Testis (tissue), 5 donors: ENCODE measurements at regions of chr11 and their contacts with region 1.

Region 1: DNA sequence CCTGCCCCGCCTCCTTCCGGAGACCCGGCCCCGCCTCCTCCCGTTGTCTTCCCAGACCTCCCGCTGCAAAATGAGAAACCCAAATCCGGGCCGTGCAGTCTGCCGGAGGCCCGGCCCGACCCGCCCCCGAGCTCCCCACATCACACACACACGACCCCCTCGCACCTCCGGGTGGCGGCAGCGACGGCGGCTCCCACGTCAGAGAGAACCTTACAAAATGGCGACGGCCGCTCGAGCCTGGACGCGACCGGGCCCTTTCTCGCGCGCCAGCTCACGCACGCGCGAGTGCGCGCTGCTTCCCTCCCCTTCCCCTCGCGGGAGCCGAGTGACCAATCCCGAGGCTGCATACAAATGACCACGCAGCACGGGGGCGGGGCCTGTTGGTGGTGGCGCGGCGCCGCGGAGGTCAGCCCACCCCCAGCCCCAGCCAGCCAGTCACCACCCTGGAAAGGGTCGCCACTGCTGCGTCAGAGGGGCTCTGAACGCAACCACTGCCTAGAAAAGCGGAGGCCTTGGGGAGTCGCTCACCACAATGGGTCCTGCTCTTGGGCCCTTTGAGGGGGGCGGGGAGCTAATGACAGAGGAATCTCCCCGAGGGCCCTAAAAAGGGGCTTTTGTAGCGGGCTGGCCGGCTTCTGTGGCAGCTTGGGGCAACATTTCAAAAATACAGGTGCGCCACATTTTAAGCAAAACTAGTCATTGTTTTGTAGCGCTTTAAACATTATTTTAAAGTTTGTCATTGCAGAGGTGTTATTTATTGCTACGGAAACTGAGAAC is at the start of gene RBM4B:
- DNase-seq: peak; percentile 98
- H3K4me3 ChIP-seq: peak within 1 kb of the TSS; percentile 63 to 84
- H3K27ac ChIP-seq: peak within 1 kb of the TSS; percentile 89
- H3K4me1 ChIP-seq: peaks cover 14% of the 10 kb centered on the region
- H3K27me3 ChIP-seq: no peaks in the 10 kb centered on the region
- CTCF ChIP-seq: no peak
- POLR2A ChIP-seq: peak; percentile 10
- total RNA-seq, gene RBM4B: 35.0 to 35.7 TPM

Region 2: DNA sequence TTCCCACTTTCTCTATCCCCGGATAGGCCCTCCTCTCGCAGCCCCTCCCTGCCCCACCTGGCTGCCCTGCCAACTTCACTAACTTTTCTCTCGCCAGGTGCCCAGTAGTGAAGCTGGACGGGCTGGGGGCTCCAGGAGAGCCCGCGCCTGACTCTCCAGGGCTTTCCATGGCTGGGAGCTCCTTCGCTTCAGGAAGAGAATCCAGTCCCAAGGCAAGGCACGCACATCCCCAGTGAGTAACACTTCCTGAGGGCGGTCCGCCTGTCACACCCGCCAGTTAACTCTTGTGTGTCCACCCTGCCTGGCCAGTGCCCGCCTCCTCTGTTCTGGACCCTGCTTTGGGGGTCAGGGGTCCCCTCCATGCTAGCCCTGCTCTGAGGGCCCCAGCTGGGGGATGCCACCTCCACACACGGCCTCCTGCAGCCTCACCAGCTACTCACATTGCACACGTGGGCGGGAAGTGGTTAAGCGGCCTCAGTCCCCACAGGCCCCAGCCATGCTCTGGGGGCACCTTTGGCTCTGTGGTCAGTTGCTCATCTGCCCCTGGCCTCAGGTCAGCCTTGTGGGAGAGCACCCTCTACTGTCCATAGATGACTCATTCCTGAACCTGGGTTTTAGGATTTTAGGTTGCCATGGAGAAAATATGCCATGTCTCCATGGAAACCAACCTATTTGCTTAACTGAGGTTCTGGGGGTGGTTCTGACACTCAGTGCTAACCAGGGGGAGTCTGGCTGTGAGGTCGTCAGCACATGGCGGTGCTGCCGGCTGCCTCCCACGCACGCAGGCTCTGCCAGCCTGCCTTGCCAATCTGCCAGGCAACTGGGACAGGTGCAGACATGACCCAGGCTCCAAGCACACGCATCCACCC is 341.3 kb before region 1 on chr11 and contains the start of gene RIN1:
- intact Hi-C with region 1: no loop called
- DNase-seq: no peak
- H3K4me3 ChIP-seq: peak within 1 kb of the TSS; percentile 21 to 39
- H3K27ac ChIP-seq: no peak within 1 kb of the TSS
- H3K4me1 ChIP-seq: peaks cover 14% of the 10 kb centered on the region
- H3K27me3 ChIP-seq: no peaks in the 10 kb centered on the region
- CTCF ChIP-seq: peak; percentile 26 to 37 (median 28)
- POLR2A ChIP-seq: no peak
- total RNA-seq, gene RIN1: 8.2 to 8.5 TPM

Region 3: DNA sequence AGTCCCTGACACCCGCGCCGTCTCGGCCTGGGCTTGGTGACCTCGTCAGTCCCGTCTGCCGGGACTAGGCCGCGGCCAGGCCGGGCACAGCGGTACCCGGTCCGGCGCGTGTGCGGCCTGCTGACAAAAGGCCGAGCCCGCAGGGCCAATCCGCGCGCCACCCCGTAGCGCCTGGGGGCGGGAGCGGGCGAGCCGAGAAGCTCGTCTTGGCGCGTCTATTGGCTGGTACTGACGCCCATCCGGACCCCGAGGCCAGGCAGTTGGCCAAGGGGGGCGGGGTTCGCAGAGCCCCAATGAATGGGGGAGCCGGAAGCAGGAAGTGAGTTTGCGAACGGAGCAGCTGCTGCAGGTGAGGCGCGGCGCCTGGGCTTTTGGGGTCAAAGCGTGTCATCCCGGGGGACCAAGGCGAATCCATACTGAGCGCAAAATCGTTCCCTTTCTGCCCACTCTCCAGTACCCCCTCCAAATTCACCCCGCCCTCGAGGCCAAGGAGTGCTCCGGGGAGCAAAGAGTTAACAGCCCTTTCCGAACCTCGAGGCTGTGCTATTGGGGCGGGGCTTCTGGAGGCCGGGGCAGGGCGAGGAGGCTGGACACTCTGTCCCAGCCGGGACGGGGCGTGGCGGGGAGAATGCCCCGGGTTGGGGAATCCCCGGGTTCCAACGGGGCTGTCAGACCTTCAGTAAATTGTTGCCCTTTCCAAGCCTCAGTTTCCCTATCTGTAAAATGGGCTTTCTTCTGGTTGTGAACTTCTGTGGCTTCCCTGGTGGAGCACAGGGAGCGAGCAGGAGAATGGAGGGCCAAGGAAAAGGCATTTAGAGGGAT is 197.5 kb before region 1 on chr11 and contains the start of gene DPP3:
- intact Hi-C with region 1: loop called (anchors 10 kb)
- DNase-seq: peak; percentile 98
- H3K4me3 ChIP-seq: peak within 1 kb of the TSS; percentile 66 to 75
- H3K27ac ChIP-seq: peak within 1 kb of the TSS; percentile 74 to 75
- H3K4me1 ChIP-seq: peaks cover 5% of the 10 kb centered on the region
- H3K27me3 ChIP-seq: no peaks in the 10 kb centered on the region
- CTCF ChIP-seq: peak in 2 of 3 experiments; percentile 4 to 24
- POLR2A ChIP-seq: peak; percentile 53
- total RNA-seq, gene DPP3: 29.3 to 31.0 TPM

Region 4: DNA sequence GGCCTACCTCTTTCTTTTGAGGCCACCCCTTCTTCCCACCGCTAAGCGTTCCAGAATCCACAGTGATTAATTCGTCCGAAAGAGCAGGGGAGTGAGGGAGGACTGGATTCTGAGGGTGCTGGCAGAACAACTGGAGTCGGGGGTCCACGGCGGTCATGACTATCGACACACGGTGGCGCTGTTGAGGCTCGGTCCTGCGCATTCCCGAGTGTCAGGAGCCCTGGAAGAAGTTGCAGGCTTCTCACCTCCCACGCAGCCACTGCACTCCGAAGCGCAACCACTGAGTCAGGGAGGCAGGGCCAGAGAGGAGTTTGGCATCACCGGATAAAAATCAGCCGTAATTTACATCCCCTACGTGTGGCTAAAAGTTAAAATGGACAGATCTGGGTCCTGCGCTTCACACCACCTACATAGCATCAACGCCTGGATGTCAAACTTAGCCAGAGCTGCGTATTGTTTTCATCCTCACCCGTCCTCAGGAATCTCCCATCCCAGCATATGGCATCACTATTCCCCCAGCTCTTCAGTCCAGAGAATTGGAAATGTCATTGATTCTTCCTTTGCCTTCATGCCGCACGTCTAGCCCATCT is 98.7 kb before region 1 on chr11:
- intact Hi-C with region 1: loop called (anchors 5 kb)
- DNase-seq: peak; percentile 88
- H3K4me3 ChIP-seq: no peak overlapping the region
- H3K27ac ChIP-seq: no peak overlapping the region
- H3K4me1 ChIP-seq: peaks cover 6% of the 10 kb centered on the region
- H3K27me3 ChIP-seq: no peaks in the 10 kb centered on the region
- CTCF ChIP-seq: peak; percentile 87 to 88 (median 87)
- POLR2A ChIP-seq: no peak

Region 5: DNA sequence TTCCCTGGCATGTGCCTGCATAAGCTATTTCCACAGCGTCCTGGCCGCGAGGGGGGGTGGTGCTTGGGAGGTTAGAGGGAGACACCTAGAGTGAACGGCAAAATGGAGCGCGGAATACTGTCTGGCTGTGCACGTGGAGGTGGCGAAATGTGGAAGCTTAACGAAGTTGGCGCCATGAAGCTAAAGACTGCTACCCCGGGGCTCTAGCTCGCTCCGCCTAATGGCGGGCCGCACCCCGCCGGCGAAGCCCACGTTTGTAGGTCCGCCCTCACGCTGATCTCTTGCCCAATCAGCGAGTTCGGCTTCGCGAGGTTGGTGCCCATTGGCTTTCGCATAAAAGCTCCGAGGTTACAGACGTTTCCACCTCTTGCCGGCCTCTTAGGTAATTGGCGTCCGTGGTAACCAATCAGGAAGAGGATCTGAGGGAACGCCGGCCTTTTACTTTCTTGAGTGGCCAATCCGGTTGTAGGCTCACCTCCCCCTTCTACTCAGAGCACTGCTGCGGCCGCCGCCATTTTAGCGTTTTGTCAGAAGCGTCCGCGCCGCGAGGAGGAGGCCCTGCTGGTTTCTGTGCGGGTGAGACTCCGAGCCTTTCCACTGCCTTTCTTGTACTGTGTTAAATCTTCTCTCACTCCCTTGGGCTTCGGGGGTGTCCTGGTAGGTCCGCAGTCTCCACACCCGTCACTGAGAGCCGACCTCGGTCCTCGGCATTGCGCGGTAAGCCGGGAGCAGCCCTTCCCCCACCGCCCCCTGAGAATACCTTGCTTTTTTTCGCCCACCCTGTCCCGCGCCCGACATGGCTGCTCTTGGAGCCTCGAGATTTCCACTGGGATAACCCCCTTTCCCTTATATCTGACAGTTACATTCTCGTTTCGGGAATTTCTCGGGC is 39.4 kb before region 1 on chr11 and contains the start of gene RBM4:
- intact Hi-C with region 1: loop called (anchors 5 kb)
- DNase-seq: peak; percentile 100
- H3K4me3 ChIP-seq: peak within 1 kb of the TSS; percentile 82 to 95
- H3K27ac ChIP-seq: peak within 1 kb of the TSS; percentile 96 to 97
- H3K4me1 ChIP-seq: peaks cover 44% of the 10 kb centered on the region
- H3K27me3 ChIP-seq: no peaks in the 10 kb centered on the region
- CTCF ChIP-seq: no peak
- POLR2A ChIP-seq: peak; percentile 45
- total RNA-seq, gene RBM4: 95.2 to 123 TPM